ENCODE measurements at regions of chr4 and their contacts with region 1.

Region 1: DNA sequence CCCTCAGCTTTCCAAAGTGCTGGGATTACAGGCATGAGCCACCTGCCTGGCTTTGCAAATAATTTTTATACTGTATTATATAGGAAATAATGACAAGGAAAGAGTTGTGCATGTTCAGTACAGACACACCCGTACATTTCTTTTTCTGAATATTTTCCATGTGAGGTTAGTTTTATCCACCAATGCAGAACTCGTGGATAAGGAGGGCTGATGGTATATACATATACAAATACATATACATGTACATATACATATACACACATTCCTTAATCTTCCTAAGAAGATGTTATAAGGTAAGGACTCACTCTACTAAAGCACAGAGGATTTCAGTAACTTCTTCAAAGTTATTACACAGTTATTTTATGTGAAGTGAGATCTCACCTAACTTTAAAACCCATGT is 925.8 kb downstream of the C4orf33 start:
- DNase-seq: no peak
- ATAC-seq: no peak
- H3K4me3 ChIP-seq: no peak overlapping the region
- H3K27ac ChIP-seq: no peak overlapping the region
- H3K4me1 ChIP-seq: no peaks in the 10 kb centered on the region
- H3K27me3 ChIP-seq: no peaks in the 10 kb centered on the region
- CTCF ChIP-seq: no peak

Region 2: GRCh38 chr4:129998436-129999150 is 23.1 kb before region 1 on chr4:
- intact Hi-C with region 1: loop called in 1 of 2 experiments (anchors 2 kb)
- DNase-seq: no peak
- ATAC-seq: no peak
- H3K4me3 ChIP-seq: no peak overlapping the region
- H3K27ac ChIP-seq: no peak overlapping the region
- H3K4me1 ChIP-seq: no peaks in the 10 kb centered on the region
- H3K27me3 ChIP-seq: no peaks in the 10 kb centered on the region
- CTCF ChIP-seq: no peak

Region 3: DNA sequence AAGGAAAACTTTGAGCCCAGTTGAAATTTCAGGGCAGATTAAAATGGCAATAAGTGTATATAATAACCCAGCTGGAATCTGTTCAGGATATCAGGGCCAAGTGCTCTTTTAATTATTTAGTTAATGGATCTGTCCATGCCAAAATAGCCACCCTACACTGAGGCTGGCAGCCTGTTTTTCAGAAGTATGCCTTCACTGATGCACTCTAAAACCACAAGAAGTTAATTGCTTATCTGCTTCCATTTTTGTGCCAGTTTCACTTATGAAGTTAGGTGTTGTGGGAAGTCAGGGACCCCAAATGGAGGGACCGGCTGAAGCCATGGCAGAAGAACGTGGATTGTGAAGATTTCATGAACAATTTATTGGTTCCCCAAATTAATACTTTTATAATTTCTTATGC is 34.6 kb after region 1 on chr4:
- intact Hi-C with region 1: no loop called
- DNase-seq: no peak
- ATAC-seq: no peak
- H3K4me3 ChIP-seq: no peak overlapping the region
- H3K27ac ChIP-seq: no peak overlapping the region
- H3K4me1 ChIP-seq: no peaks in the 10 kb centered on the region
- H3K27me3 ChIP-seq: no peaks in the 10 kb centered on the region
- CTCF ChIP-seq: no peak